Dendritic cell treated with granulocyte-macrophage colony-stimulating factor and Interleukin-4, amounts not matched to agents 40 ng/mL and 50 ng/mL, for 4 days (primary cell): ENCODE measurements at regions of chr2 and their contacts with region 1.

Region 1: GRCh38 chr2:201130524-201131186 is 14.7 kb downstream of the CFLAR start:
- H3K4me3 Mint-ChIP-seq: peak overlapping the region; percentile 85
- H3K27ac Mint-ChIP-seq: peak overlapping the region; percentile 95
- H3K4me1 Mint-ChIP-seq: peaks cover 71% of the 10 kb centered on the region
- H3K27me3 Mint-ChIP-seq: no peaks in the 10 kb centered on the region

Region 2: DNA sequence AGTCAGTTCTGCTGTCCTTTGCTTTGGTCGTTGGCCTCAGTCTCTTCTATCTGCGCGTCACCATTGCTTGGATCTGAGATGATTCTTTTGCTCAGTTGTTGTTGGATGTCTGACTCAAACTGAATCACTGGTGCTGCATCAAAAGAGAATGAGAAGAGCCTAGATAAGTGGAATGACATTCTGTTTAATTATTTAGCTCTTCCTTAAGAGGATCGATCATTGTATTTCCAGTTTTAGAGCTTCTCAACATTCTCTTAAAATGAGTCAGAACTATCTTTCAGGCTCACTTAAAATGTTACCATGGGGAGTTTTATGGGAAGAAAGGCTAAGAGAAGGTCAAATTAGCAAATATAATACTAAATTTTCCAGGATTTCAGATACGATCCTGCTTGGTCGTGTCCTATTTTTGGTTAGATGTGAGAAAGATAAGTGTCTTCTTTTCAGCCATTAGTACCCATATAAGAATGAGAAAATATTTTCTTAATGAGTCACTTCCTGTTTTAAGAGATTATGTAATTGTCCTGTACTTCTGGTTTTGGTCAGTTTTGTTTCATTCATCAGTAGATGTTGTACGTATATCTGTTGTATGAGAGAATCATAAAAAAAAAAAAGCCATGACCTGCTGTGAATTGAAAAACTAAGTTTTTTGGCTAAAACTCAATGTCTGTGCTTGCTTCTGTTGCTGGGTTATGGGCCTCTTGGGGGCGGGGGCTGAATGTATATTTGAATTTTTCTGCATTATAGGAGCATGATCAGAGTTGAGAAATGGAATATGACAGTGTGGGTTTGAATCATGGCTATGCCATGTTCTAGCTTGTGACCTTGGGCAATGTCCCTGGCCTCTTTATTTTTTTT is 20.7 kb after region 1 on chr2:
- intact Hi-C with region 1: loop called (anchors 2 kb)
- H3K4me3 Mint-ChIP-seq: peak overlapping the region; percentile 49
- H3K27ac Mint-ChIP-seq: peak overlapping the region; percentile 80
- H3K4me1 Mint-ChIP-seq: peaks cover 82% of the 10 kb centered on the region
- H3K27me3 Mint-ChIP-seq: no peaks in the 10 kb centered on the region